ENCODE measurements at regions of chr1 and their contacts with region 1.

Region 1: GRCh38 chr1:156319664-156320063 is 18.4 kb downstream of the CCT3 start:
- DNase-seq: no peak
- H3K4me3 ChIP-seq: no peak overlapping the region
- H3K27ac ChIP-seq: no peak overlapping the region
- H3K4me1 ChIP-seq: no peaks in the 10 kb centered on the region
- H3K27me3 ChIP-seq: no peaks in the 10 kb centered on the region
- CTCF ChIP-seq: peak in 4 of 6 experiments; percentile 23 to 57 (median 46)
- POLR2A ChIP-seq: no peak

Region 2: DNA sequence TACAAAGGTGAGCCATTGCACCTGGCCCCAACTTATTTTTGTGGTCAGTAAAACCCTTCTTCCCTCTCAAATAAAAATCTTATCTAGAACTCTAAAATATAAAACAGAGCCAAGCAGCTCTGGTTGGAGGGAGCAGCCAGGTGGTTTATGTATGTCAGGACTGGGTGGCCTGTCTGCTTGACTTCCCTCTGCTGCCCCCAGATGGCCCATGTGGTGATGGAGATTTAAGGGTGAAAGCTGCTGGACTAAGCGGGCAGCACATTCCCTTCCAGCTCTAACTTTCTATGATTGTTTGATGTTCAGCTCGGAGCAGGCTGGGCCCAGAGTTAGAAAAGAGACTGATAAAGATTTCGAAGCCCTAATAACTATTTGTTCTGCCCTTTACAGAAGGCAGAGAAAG is 59.9 kb before region 1 on chr1:
- intact Hi-C with region 1: loop called (anchors 10 kb)
- DNase-seq: no peak
- H3K4me3 ChIP-seq: no peak overlapping the region
- H3K27ac ChIP-seq: no peak overlapping the region
- H3K4me1 ChIP-seq: peaks cover 4 to 30% (median 10%) of the 10 kb centered on the region in 3 donors
- H3K27me3 ChIP-seq: no peaks in the 10 kb centered on the region
- CTCF ChIP-seq: no peak
- POLR2A ChIP-seq: no peak

Region 3: GRCh38 chr1:156445789-156446263 is 126.2 kb after region 1 on chr1:
- intact Hi-C with region 1: no loop called
- DNase-seq: no peak
- H3K4me3 ChIP-seq: no peak overlapping the region
- H3K27ac ChIP-seq: no peak overlapping the region
- H3K4me1 ChIP-seq: peaks cover 0 to 7% (median 0%) of the 10 kb centered on the region in 3 donors
- H3K27me3 ChIP-seq: peaks cover 0 to 61% (median 10%) of the 10 kb centered on the region in 4 donors
- CTCF ChIP-seq: peak; percentile 85 to 96 (median 95)
- POLR2A ChIP-seq: no peak